Caco-2 (cell line): ENCODE measurements at regions of chr2 and their contacts with region 1.

Region 1: GRCh38 chr2:170446082-170446481 is 268.1 kb downstream of the MYO3B start:
- DNase-seq: peak; percentile 49 to 83
- H3K4me3 ChIP-seq: no peak overlapping the region
- H3K4me3 Mint-ChIP-seq: peak overlapping the region; percentile 23
- H3K27ac Mint-ChIP-seq: peak overlapping the region; percentile 65
- H3K4me1 ChIP-seq: peaks cover 67% of the 10 kb centered on the region
- H3K4me1 Mint-ChIP-seq: peaks cover 42% of the 10 kb centered on the region
- H3K27me3 ChIP-seq: no peaks in the 10 kb centered on the region
- H3K27me3 Mint-ChIP-seq: no peaks in the 10 kb centered on the region
- CTCF ChIP-seq: no peak

Region 2: DNA sequence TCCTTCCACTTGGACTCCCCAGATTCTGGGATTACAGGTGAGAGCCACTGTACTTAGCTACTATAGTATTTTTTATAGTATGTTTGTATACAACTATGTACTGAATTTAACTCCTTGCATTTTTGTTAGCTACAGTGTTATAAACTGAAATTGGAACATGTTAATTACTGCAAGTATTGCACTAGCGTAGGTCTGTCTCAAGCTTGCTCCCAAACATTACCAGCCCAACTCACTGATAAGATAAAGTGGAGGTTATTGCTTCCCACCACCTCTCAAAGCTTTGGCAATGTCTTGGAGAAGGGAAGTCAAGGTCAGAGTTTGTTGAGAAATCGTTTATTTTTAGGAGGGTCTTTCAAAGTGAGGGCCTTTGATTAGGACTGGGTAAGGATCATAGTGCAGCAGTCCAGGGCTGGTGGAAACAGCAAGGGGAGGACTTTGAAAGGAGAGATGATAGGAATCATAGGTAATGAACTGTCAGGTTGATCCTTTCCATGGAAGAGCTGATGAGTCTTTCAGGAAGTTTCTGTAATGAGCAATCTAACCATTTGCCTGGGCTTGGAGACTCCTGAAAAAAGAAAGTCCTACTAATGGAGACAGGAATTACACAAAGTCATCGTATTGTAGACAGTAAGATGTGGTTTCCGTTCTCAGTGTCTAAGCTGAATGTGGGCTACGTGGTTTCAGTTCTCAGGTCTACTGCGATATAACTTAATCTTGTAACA is 11.0 kb before region 1 on chr2:
- CTCF ChIA-PET with region 1: no interaction called
- POLR2A ChIA-PET with region 1: no interaction called
- intact Hi-C with region 1: loop called (anchors 1 kb)
- DNase-seq: no peak
- H3K4me3 ChIP-seq: no peak overlapping the region
- H3K4me3 Mint-ChIP-seq: no peak overlapping the region
- H3K27ac Mint-ChIP-seq: no peak overlapping the region
- H3K4me1 ChIP-seq: peaks cover 27% of the 10 kb centered on the region
- H3K4me1 Mint-ChIP-seq: peaks cover 45% of the 10 kb centered on the region
- H3K27me3 ChIP-seq: no peaks in the 10 kb centered on the region
- H3K27me3 Mint-ChIP-seq: no peaks in the 10 kb centered on the region
- CTCF ChIP-seq: no peak